ENCODE measurements at regions of chr12 and their contacts with region 1.

Region 1: GRCh38 chr12:100936661-100937060 is 142.1 kb downstream of the ANO4 start:
- DNase-seq: no peak
- H3K4me3 Mint-ChIP-seq: no peak overlapping the region
- H3K27ac Mint-ChIP-seq: no peak overlapping the region
- H3K4me1 Mint-ChIP-seq: no peaks in the 10 kb centered on the region
- H3K27me3 Mint-ChIP-seq: no peaks in the 10 kb centered on the region

Region 2: DNA sequence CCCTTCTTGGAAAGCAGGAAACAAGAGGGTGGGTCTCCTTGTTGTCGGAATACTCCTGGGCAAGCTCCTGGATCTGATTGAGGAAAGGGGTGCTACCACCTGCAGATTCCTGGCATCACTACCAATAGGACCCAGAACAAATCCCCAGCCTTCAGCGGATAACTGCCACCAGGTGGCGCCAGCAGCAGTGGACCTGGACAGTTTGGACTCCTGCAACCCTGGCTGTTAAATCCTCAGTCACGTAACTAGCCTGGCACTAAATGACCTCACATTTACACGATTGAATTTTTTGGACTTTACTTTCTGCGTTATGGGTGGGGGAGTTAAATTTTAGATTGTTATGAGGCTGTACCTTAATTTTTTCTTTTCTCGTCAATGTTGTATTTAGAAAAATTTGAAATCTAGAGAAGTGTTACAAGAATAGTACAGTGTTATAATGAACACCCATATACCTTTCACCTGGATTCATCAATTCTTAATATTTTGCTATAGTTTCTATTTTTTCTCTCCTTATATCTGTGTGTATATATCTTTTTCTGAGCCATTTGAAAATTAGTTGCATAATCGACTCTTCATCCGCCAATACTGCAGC is 267.6 kb before region 1 on chr12:
- CTCF ChIA-PET with region 1: no interaction called
- intact Hi-C with region 1: loop called (anchors 10 kb)
- DNase-seq: peak; percentile 70
- H3K4me3 Mint-ChIP-seq: no peak overlapping the region
- H3K27ac Mint-ChIP-seq: no peak overlapping the region
- H3K4me1 Mint-ChIP-seq: no peaks in the 10 kb centered on the region
- H3K27me3 Mint-ChIP-seq: peaks cover 9% of the 10 kb centered on the region

Region 3: GRCh38 chr12:101127521-101128219 is 191.0 kb after region 1 on chr12:
- CTCF ChIA-PET with region 1: no interaction called
- intact Hi-C with region 1: no loop called
- DNase-seq: no peak
- H3K4me3 Mint-ChIP-seq: no peak overlapping the region
- H3K27ac Mint-ChIP-seq: no peak overlapping the region
- H3K4me1 Mint-ChIP-seq: no peaks in the 10 kb centered on the region
- H3K27me3 Mint-ChIP-seq: peaks cover 2% of the 10 kb centered on the region

Measured in activated naive CD4-positive, alpha-beta T cell treated with anti-CD3 and anti-CD28 coated beads for 36 hours (primary cell).